ENCODE measurements at regions of chr17 and their contacts with region 1.

Region 1: GRCh38 chr17:44533533-44534246 is 23.6 kb upstream of the FZD2 start:
- DNase-seq: peak; percentile 86
- H3K4me3 Mint-ChIP-seq: no peak overlapping the region
- H3K27ac Mint-ChIP-seq: no peak overlapping the region
- H3K4me1 Mint-ChIP-seq: peaks cover 8% of the 10 kb centered on the region
- H3K27me3 Mint-ChIP-seq: peaks cover 7% of the 10 kb centered on the region

Region 2: GRCh38 chr17:44522883-44523671 is 10.6 kb before region 1 on chr17:
- CTCF ChIA-PET with region 1: interaction called, 19 read pairs
- POLR2A ChIA-PET with region 1: interaction called, 3 read pairs
- DNase-seq: peak; percentile 62
- H3K4me3 Mint-ChIP-seq: no peak overlapping the region
- H3K27ac Mint-ChIP-seq: no peak overlapping the region
- H3K4me1 Mint-ChIP-seq: no peaks in the 10 kb centered on the region
- H3K27me3 Mint-ChIP-seq: peaks cover 5% of the 10 kb centered on the region

Region 3: GRCh38 chr17:44607836-44608690 is 74.4 kb after region 1 on chr17:
- CTCF ChIA-PET with region 1: no interaction called
- POLR2A ChIA-PET with region 1: no interaction called
- DNase-seq: no peak
- H3K4me3 Mint-ChIP-seq: no peak overlapping the region
- H3K27ac Mint-ChIP-seq: no peak overlapping the region
- H3K4me1 Mint-ChIP-seq: no peaks in the 10 kb centered on the region
- H3K27me3 Mint-ChIP-seq: no peaks in the 10 kb centered on the region

Region 4: GRCh38 chr17:44652727-44653126 is 119.0 kb after region 1 on chr17:
- CTCF ChIA-PET with region 1: no interaction called
- POLR2A ChIA-PET with region 1: no interaction called
- DNase-seq: no peak
- H3K4me3 Mint-ChIP-seq: no peak overlapping the region
- H3K27ac Mint-ChIP-seq: no peak overlapping the region
- H3K4me1 Mint-ChIP-seq: peaks cover 8% of the 10 kb centered on the region
- H3K27me3 Mint-ChIP-seq: peaks cover 55% of the 10 kb centered on the region

Region 5: GRCh38 chr17:44672479-44673093 is 138.9 kb after region 1 on chr17:
- CTCF ChIA-PET with region 1: interaction called, 26 read pairs
- POLR2A ChIA-PET with region 1: no interaction called
- DNase-seq: no peak
- H3K4me3 Mint-ChIP-seq: no peak overlapping the region
- H3K27ac Mint-ChIP-seq: no peak overlapping the region
- H3K4me1 Mint-ChIP-seq: no peaks in the 10 kb centered on the region
- H3K27me3 Mint-ChIP-seq: no peaks in the 10 kb centered on the region

Region 6: DNA sequence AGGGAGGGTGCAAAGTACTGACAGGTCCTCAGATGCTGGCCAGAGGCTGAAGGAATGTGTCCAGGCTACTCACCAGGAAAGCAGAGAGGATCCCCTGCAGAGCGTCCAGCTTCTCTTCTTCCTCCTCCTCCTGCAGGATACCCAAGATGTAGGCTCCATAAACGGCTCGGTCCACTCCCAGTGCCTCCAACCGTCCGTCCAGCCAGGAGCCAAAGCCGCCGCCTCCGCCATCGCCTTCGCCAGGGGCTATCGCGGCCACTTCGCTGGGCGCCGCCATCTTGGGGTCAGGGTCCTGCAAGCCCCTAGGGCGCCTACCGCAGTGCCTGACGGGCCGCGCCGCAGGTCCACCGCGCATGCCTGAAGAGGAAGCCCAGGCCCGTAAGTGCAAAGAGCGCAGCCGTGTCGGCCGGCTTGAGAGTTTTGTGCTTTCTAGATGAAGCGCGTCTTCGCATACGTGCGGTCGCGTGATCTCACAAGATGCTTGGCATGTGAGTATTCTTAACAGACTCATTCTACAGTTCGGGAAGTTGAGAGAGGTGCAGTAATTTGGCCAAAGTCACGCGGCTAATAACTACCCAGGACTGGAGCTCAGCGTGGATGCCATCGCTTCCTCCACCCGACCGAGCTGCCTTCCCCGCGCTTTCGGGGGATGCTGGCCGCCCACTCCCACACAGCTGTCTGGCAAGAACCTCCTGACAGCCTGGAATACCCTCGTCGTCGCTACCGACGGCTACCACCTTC is 156.0 kb after region 1 on chr17 and contains the start of gene CCDC43:
- CTCF ChIA-PET with region 1: interaction called, 13 read pairs
- POLR2A ChIA-PET with region 1: no interaction called
- DNase-seq: peak; percentile 93
- H3K4me3 Mint-ChIP-seq: peak within 1 kb of the TSS; percentile 97
- H3K27ac Mint-ChIP-seq: peak within 1 kb of the TSS; percentile 91
- H3K4me1 Mint-ChIP-seq: peaks cover 32% of the 10 kb centered on the region
- H3K27me3 Mint-ChIP-seq: no peaks in the 10 kb centered on the region
- total RNA-seq, gene CCDC43: 22.0 to 22.8 TPM

Region 7: GRCh38 chr17:44738214-44738906 is 204.7 kb after region 1 on chr17:
- CTCF ChIA-PET with region 1: no interaction called
- POLR2A ChIA-PET with region 1: no interaction called
- DNase-seq: no peak
- H3K4me3 Mint-ChIP-seq: no peak overlapping the region
- H3K27ac Mint-ChIP-seq: no peak overlapping the region
- H3K4me1 Mint-ChIP-seq: no peaks in the 10 kb centered on the region
- H3K27me3 Mint-ChIP-seq: no peaks in the 10 kb centered on the region

Region 8: DNA sequence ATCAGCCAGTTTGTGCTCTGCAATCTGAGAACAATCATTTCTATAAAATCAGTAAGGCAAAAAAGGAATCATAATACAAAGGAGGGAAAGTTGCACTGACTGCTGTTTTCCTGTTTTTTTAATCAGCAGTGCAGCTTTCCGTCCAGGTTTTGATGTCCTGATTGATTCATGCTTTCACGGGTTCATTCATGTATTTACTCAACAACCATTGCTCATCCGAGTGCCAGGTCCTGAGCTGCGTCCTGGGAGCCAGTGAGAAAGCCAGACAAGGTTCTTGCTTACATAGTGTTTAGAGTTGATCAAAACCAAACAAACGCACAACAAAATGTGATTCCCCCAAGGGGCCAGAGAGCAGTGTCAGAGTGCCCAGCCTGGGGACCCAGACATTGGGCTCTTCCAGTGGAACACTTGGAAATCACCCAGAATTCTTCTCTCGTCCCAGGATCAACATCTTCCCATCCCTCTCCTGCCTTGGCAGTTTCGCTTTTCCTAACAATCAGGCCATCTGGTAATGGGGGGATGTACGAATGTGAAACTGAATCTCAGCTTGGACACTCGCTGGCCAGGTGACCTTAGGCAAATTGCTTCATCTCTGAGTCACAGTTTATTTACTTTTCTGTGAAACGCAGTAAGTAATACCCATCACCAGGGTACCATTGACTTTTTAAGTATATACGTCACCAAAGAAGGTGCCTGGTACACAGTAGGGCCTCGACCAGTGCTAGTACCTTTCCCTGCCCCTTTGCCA is 447.7 kb after region 1 on chr17:
- CTCF ChIA-PET with region 1: no interaction called
- POLR2A ChIA-PET with region 1: no interaction called
- DNase-seq: no peak
- H3K4me3 Mint-ChIP-seq: no peak overlapping the region
- H3K27ac Mint-ChIP-seq: no peak overlapping the region
- H3K4me1 Mint-ChIP-seq: no peaks in the 10 kb centered on the region
- H3K27me3 Mint-ChIP-seq: peaks cover 38% of the 10 kb centered on the region